ENCODE measurements at regions of chr10 and their contacts with region 1.

Region 1: GRCh38 chr10:30534465-30535144 is 94.9 kb downstream of the LYZL2 start:
- DNase-seq: peak; percentile 84 to 92 (median 89)
- H3K4me3 ChIP-seq: no peak overlapping the region
- H3K27ac ChIP-seq: no peak overlapping the region
- H3K4me1 ChIP-seq: peaks cover 15 to 79% (median 49%) of the 10 kb centered on the region in 4 experiments
- H3K27me3 ChIP-seq: no peaks in the 10 kb centered on the region

Region 2: DNA sequence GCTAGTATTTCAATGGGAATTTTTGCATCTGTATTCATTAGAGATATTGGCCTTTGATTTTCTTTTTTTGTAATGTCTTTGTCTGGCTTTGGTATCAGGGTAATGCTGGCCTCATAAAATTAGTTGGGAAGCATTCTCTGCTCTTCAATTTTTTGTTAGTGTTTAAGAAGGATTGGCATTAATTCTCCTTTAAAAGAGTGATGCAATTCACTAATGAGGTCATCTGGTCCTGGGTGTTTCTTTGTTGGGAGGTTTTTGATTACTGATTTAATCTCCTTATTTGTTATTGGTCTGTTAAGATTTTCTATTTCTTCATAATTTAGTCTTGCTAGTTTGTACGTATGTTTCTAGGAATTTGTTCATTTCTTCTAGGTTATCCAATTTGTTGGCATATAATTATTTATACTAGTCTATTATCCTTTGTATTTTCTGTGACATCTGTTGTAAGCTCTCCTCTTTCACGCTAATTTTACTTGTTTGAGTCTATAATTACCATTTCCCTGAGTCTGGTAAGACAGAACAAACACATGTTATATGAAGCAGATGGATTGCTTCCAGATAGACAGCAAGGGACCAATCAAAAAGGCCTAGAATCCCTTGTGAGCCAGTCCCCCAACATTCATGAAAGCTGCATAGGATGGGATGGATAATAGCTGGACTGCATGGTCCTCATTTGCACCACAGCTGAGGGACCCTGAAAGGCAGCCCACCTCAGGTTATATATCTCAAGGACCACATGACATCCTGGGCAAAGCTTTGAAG is 239.9 kb before region 1 on chr10:
- CTCF ChIA-PET with region 1: no interaction called
- POLR2A ChIA-PET with region 1: no interaction called
- DNase-seq: no peak
- H3K4me3 ChIP-seq: no peak overlapping the region
- H3K27ac ChIP-seq: no peak overlapping the region
- H3K4me1 ChIP-seq: no peaks in the 10 kb centered on the region
- H3K27me3 ChIP-seq: no peaks in the 10 kb centered on the region

Region 3: DNA sequence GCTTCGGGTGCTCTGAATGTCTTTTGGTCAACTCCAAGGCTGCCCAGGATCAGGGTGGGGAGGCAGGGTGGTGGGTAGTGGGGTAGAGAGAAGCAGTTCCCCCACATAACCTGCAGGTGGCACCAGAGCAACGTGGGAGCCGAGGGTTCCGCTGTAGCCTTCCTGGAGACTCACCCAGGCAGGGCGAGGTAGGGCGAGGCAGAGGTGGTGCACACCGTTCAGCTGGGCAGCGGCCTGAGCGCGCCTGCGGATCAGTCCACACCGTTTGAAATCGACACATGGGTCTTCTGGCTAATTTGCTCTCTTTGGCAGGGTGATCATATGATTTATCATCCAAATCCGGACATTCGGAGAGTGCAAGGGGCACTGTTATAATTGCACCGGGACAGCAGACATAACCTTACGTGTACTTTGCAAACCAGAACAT is 142.0 kb before region 1 on chr10:
- CTCF ChIA-PET with region 1: interaction called, 16 read pairs
- POLR2A ChIA-PET with region 1: no interaction called
- DNase-seq: peak; percentile 59 to 76 (median 72)
- H3K4me3 ChIP-seq: peak overlapping the region in 4 of 7 experiments; percentile 32 to 75 (median 59)
- H3K27ac ChIP-seq: no peak overlapping the region
- H3K4me1 ChIP-seq: peaks cover 0 to 7% (median 4%) of the 10 kb centered on the region in 4 experiments
- H3K27me3 ChIP-seq: no peaks in the 10 kb centered on the region

Region 4: GRCh38 chr10:30456266-30456665 is 78.3 kb before region 1 on chr10:
- CTCF ChIA-PET with region 1: interaction called, 28 read pairs
- POLR2A ChIA-PET with region 1: interaction called, 5 read pairs
- DNase-seq: peak; percentile 53 to 96 (median 93)
- H3K4me3 ChIP-seq: peak overlapping the region in 4 of 7 experiments; percentile 4 to 52 (median 35)
- H3K27ac ChIP-seq: peak overlapping the region in 1 of 2 experiments; percentile 56
- H3K4me1 ChIP-seq: peaks cover 22 to 61% (median 36%) of the 10 kb centered on the region in 4 experiments
- H3K27me3 ChIP-seq: no peaks in the 10 kb centered on the region

Region 5: GRCh38 chr10:30553625-30554439 is 19.2 kb after region 1 on chr10:
- CTCF ChIA-PET with region 1: interaction called, 12 read pairs
- POLR2A ChIA-PET with region 1: interaction called, 3 read pairs
- DNase-seq: peak in 2 of 3 donors; percentile 35 to 40
- H3K4me3 ChIP-seq: peak overlapping the region in 3 of 7 experiments; percentile 30 to 63 (median 48)
- H3K27ac ChIP-seq: peak overlapping the region in 1 of 2 experiments; percentile 73
- H3K4me1 ChIP-seq: peaks cover 13 to 40% (median 24%) of the 10 kb centered on the region in 4 experiments
- H3K27me3 ChIP-seq: no peaks in the 10 kb centered on the region

Region 6: DNA sequence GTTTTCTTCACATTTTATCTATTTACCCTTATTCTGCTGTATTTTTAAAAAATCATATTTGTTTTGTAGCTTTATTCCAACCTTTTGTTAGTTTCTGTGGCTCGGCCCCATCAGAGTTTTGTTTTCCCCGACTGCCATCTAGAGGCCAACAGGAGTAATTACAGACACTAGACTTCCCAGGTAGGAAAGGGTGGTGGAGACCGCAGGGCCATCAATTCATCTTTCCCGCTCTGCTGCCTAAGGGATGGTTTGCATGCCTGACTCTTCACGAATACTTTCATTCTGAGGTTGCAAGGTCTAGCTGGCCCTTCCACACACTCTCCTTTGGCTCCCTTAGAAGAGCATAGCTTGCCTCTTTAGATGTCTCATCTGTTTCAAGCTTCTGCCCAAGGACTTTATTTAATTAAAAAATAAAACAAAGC is 56.7 kb after region 1 on chr10:
- CTCF ChIA-PET with region 1: interaction called, 25 read pairs
- POLR2A ChIA-PET with region 1: no interaction called
- DNase-seq: peak; percentile 63 to 81 (median 74)
- H3K4me3 ChIP-seq: no peak overlapping the region
- H3K27ac ChIP-seq: no peak overlapping the region
- H3K4me1 ChIP-seq: peaks cover 6 to 26% (median 19%) of the 10 kb centered on the region in 4 experiments
- H3K27me3 ChIP-seq: no peaks in the 10 kb centered on the region